Mammary epithelial cell (primary cell): ENCODE measurements at regions of chr3 and their contacts with region 1.

Region 1: GRCh38 chr3:136142592-136142991 is 53.5 kb downstream of the MSL2 start:
- DNase-seq: peak; percentile 87
- H3K4me3 ChIP-seq: no peak overlapping the region
- H3K27ac ChIP-seq: peak overlapping the region; percentile 96
- H3K4me1 ChIP-seq: peaks cover 32% of the 10 kb centered on the region
- H3K27me3 ChIP-seq: no peaks in the 10 kb centered on the region
- CTCF ChIP-seq: no peak

Region 2: GRCh38 chr3:136007166-136007565 is 135.4 kb before region 1 on chr3:
- CTCF ChIA-PET with region 1: no interaction called
- dilution Hi-C with region 1: no loop called
- in situ Hi-C with region 1: no loop called
- intact Hi-C with region 1: no loop called
- DNase-seq: no peak
- H3K4me3 ChIP-seq: no peak overlapping the region
- H3K27ac ChIP-seq: no peak overlapping the region
- H3K4me1 ChIP-seq: peaks cover 9% of the 10 kb centered on the region
- H3K27me3 ChIP-seq: no peaks in the 10 kb centered on the region
- CTCF ChIP-seq: no peak

Region 3: DNA sequence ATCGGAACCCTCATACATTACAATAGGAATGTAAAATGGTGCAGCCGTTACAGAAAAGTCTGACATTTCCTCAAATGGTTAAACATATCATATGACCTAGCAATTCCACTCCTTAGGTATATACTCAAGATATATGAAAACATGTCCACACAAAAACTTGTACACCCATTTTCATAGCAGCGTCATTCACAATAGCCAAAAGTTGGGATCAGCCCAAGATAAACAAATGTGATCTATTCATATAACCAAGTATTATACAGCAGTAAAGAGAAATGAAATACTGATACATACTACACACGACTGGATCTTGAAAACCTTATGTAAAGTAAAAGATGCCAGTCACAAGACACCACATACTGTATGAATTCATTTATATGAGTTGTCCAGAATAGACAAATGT is 48.8 kb before region 1 on chr3:
- CTCF ChIA-PET with region 1: no interaction called
- dilution Hi-C with region 1: no loop called
- in situ Hi-C with region 1: no loop called
- intact Hi-C with region 1: no loop called
- DNase-seq: no peak
- H3K4me3 ChIP-seq: no peak overlapping the region
- H3K27ac ChIP-seq: no peak overlapping the region
- H3K4me1 ChIP-seq: no peaks in the 10 kb centered on the region
- H3K27me3 ChIP-seq: no peaks in the 10 kb centered on the region
- CTCF ChIP-seq: no peak

Region 4: DNA sequence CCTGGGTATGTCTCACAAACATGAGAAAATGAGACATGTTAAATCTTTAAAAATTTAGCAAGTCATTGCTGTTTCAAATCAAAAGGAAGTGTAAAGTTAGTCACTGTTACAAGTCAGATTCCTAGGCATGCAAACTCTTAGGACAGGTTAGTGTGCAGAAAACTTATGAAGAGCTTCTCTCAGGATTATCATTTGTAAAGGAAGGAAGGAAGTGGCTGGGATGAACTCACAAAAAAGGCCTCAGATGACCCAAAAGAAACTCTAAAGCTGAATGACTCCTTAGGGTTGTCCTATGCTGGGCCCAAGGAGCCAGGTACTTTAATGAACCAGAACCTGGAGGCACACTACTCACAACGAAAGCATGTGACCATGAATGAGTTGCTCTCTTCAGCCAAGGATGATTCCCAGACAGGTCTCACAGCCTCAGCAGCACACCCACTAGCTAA is 28.5 kb after region 1 on chr3:
- CTCF ChIA-PET with region 1: no interaction called
- dilution Hi-C with region 1: no loop called
- in situ Hi-C with region 1: no loop called
- intact Hi-C with region 1: loop called (anchors 1 kb)
- DNase-seq: peak; percentile 82
- H3K4me3 ChIP-seq: no peak overlapping the region
- H3K27ac ChIP-seq: peak overlapping the region; percentile 77
- H3K4me1 ChIP-seq: peaks cover 26% of the 10 kb centered on the region
- H3K27me3 ChIP-seq: no peaks in the 10 kb centered on the region
- CTCF ChIP-seq: no peak

Region 5: GRCh38 chr3:136177876-136178275 is 35.3 kb after region 1 on chr3:
- CTCF ChIA-PET with region 1: interaction called, 32 read pairs
- dilution Hi-C with region 1: no loop called
- in situ Hi-C with region 1: no loop called
- intact Hi-C with region 1: no loop called
- DNase-seq: no peak
- H3K4me3 ChIP-seq: no peak overlapping the region
- H3K27ac ChIP-seq: no peak overlapping the region
- H3K4me1 ChIP-seq: peaks cover 4% of the 10 kb centered on the region
- H3K27me3 ChIP-seq: no peaks in the 10 kb centered on the region
- CTCF ChIP-seq: no peak

Region 6: GRCh38 chr3:136250226-136250902 is 107.8 kb after region 1 on chr3 and contains the start of gene PCCB:
- CTCF ChIA-PET with region 1: no interaction called
- dilution Hi-C with region 1: loop called (anchors 5 kb)
- in situ Hi-C with region 1: no loop called
- intact Hi-C with region 1: loop called (anchors 5 kb)
- DNase-seq: peak; percentile 95
- H3K4me3 ChIP-seq: peak within 1 kb of the TSS; percentile 63 to 74 (median 71)
- H3K27ac ChIP-seq: peak within 1 kb of the TSS; percentile 39
- H3K4me1 ChIP-seq: peaks cover 13% of the 10 kb centered on the region
- H3K27me3 ChIP-seq: no peaks in the 10 kb centered on the region
- CTCF ChIP-seq: peak; percentile 40 to 89
- total RNA-seq, gene PCCB: 29.7 to 35.5 TPM

Region 7: DNA sequence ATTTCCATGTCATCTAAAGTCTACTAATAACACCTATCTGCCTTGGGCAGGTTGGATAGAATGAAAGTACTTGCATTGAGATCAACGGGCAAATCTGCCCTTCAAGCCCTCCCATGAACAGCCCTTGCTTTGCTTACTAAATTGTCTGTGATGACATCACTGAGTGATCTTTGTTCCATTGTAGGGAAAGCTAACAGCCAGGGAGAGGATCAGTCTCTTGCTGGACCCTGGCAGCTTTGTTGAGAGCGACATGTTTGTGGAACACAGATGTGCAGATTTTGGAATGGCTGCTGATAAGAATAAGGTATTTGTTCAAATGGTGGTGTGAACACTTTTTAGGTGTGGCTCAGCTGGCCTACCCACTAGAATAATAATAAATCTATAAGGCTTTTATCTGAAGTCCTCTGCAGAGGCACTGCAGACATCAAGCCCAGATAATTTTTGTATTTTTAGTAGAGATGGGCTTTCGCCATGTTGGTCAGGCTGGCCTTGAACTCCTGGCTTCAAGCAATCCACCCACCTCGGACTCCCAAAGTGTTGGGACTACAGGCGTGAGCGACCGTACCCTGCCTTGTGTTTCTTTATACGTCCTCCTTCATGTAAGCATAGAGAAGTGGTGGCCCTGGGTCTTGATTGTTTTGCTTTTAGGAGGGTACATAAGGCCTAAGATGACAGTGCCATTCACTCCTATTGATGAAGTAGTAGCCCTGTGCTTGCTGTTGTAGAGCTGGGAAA is 113.2 kb after region 1 on chr3:
- CTCF ChIA-PET with region 1: no interaction called
- dilution Hi-C with region 1: loop called (anchors 5 kb)
- in situ Hi-C with region 1: no loop called
- intact Hi-C with region 1: loop called (anchors 5 kb)
- DNase-seq: no peak
- H3K4me3 ChIP-seq: no peak overlapping the region
- H3K27ac ChIP-seq: no peak overlapping the region
- H3K4me1 ChIP-seq: peaks cover 8% of the 10 kb centered on the region
- H3K27me3 ChIP-seq: no peaks in the 10 kb centered on the region
- CTCF ChIP-seq: no peak

Region 8: GRCh38 chr3:136535906-136536305 is 393.3 kb after region 1 on chr3:
- CTCF ChIA-PET with region 1: no interaction called
- dilution Hi-C with region 1: no loop called
- in situ Hi-C with region 1: no loop called
- intact Hi-C with region 1: no loop called
- DNase-seq: peak; percentile 32
- H3K4me3 ChIP-seq: no peak overlapping the region
- H3K27ac ChIP-seq: no peak overlapping the region
- H3K4me1 ChIP-seq: no peaks in the 10 kb centered on the region
- H3K27me3 ChIP-seq: no peaks in the 10 kb centered on the region
- CTCF ChIP-seq: no peak